Spleen (tissue), 13 donors: ENCODE measurements at regions of chr14 and their contacts with region 1.

Region 1: DNA sequence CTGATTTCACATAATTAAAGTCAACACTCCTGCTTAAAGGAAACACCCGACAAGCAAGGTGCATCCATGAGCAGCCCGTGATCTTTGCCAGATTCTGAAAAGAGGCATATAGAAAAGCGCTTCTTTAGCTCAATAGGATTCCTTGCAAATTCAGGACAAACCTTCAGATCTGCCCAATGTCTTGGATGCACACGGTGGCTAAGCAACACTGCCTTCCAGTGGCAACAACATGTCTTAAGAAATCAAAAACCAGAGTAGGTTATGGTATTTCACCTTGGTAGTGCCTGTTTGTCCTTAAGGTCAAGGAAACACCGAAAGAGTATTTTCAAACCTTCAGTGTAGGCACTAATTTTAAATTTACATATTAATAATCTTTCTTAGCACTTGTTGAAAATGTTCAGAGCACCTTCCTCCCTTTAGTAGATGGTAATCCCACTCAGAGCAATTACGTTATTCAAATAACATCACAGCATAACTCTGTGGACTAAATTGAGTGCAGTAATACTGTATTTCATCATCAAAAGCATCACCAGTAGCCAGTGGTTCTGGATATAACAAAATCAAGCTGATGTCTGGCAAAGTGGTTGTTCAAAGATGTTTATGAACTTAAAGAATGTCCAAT is 58.0 kb upstream of the CDKN3 start:
- DNase-seq: no peak
- H3K4me3 ChIP-seq: no peak overlapping the region
- H3K27ac ChIP-seq: no peak overlapping the region
- H3K4me1 ChIP-seq: no peaks in the 10 kb centered on the region
- H3K27me3 ChIP-seq: peaks cover 0 to 5% (median 0%) of the 10 kb centered on the region in 7 donors
- CTCF ChIP-seq: no peak
- POLR2A ChIP-seq: no peak

Region 2: GRCh38 chr14:53295985-53296582 is 1042.7 kb before region 1 on chr14:
- intact Hi-C with region 1: loop called (anchors 10 kb)
- DNase-seq: no peak
- H3K4me3 ChIP-seq: peak overlapping the region in 1 of 8 donors; percentile 29
- H3K27ac ChIP-seq: no peak overlapping the region
- H3K4me1 ChIP-seq: peaks cover 0 to 5% (median 0%) of the 10 kb centered on the region in 6 donors
- H3K27me3 ChIP-seq: no peaks in the 10 kb centered on the region
- CTCF ChIP-seq: peak; percentile 12 to 70 (median 47)
- POLR2A ChIP-seq: no peak

Region 3: GRCh38 chr14:54829455-54830224 is 490.8 kb after region 1 on chr14:
- intact Hi-C with region 1: no loop called
- DNase-seq: no peak
- H3K4me3 ChIP-seq: no peak overlapping the region
- H3K27ac ChIP-seq: no peak overlapping the region
- H3K4me1 ChIP-seq: no peaks in the 10 kb centered on the region
- H3K27me3 ChIP-seq: no peaks in the 10 kb centered on the region
- CTCF ChIP-seq: no peak
- POLR2A ChIP-seq: no peak